Dorsolateral prefrontal cortex (tissue), 120 donors: ENCODE measurements at regions of chr16 and their contacts with region 1.

Region 1: DNA sequence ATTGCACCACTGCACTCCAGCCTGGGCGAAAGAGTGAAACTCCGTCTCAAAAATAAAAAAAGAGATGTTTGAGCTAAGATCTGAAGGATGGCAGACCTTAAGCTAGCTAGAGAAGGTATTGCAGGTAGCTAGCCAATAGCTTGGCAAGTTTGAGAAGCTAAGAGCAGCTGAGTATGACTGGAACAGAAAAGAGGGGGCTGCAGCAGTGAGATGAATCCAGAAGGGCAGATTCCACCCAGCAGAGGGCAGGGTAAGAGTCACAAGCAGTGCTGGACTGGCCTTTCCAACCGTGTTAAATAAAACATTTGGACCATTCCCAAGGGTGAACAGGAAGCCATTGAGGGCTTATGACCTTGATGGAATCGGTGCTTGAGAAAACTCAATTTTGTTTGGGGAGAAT is 5.7 kb upstream of the PHAF1 start:
- DNase-seq: no peak
- H3K4me3 ChIP-seq: no peak overlapping the region
- H3K27ac ChIP-seq: no peak overlapping the region
- H3K27me3 ChIP-seq: no peaks in the 10 kb centered on the region
- CTCF ChIP-seq: peak in 42 of 56 donors; percentile 6 to 55 (median 32)

Region 2: DNA sequence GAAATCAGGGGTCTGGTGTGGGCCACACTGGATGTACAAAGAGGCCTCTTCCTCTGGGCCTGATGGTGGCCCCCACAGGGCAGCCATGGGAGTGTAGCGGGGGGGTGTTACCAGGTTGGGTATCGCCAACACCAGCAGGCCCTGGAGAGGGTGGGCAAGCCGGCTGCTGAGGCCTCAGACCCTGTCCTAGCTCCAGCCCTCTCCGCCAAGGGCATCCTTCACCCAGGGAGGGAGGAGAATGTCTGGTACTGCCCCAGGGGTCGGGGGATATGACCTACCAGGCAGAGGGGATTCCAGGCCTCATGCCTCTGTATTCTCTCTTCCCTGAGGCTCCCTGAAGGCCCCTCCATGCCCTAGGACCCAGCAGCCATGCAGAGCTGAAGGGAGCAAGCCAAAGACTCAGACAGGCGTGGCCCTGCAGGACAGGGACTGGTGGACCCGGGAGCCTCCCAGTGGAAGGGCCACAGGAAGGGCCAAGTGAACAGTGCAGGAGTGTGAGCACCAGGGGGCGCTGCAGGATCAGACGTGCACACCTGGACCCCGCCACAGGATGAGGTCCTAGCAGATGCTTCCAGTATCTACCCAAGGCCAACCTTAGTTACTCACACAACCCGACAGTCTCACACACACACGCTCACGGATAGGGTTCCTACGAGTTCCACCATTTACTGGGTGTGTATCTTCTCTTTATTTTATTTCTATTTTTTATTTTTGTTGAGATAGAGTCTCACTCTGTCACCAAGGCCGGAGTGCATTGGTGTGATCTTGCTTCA is 126.5 kb before region 1 on chr16:
- intact Hi-C with region 1: loop called (anchors 2 to 5 kb)
- DNase-seq: peak; percentile 84 to 95 (median 91)
- H3K4me3 ChIP-seq: peak overlapping the region in 1 of 59 donors; percentile 32
- H3K27ac ChIP-seq: peak overlapping the region in 15 of 59 donors; percentile 2 to 57 (median 37)
- H3K27me3 ChIP-seq: no peaks in the 10 kb centered on the region
- CTCF ChIP-seq: peak; percentile 80 to 100 (median 98)

Region 3: DNA sequence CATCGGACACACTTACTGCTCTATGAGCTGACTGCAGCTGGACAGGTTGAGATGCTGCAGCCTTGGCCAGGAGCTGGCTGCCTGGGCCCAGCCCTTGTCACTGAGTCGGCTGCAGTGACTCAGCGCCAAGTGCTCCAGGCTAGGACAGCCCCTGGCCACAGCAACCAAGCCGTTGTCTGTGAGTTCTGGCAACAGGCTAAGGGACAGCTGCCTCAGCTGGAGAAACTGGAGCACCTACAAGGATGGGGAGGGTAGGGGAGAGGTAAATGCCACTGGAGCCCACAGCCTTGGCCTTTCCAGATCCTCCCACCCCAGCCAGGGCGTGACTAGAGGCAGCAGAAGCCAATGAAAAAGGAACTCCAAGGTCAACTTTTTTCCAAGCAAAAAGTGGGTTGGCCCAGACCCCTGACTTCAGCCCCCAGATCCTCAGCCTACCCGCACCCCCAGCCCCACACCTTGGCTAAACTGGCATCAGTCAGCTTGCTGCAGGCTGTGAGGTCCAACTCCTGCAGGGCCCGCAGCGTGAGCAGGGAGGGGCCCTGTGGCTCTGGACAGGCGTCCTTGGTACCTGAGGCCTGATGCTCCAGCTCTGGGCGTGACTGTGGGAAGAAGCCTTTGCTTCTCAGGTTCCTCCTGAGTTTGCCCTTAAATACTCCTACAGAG is 103.9 kb after region 1 on chr16:
- intact Hi-C with region 1: no loop called
- DNase-seq: peak in 1 of 10 donors; percentile 16
- H3K4me3 ChIP-seq: no peak overlapping the region
- H3K27ac ChIP-seq: no peak overlapping the region
- H3K27me3 ChIP-seq: no peaks in the 10 kb centered on the region
- CTCF ChIP-seq: no peak